ENCODE measurements at regions of chr7 and their contacts with region 1.

Region 1: DNA sequence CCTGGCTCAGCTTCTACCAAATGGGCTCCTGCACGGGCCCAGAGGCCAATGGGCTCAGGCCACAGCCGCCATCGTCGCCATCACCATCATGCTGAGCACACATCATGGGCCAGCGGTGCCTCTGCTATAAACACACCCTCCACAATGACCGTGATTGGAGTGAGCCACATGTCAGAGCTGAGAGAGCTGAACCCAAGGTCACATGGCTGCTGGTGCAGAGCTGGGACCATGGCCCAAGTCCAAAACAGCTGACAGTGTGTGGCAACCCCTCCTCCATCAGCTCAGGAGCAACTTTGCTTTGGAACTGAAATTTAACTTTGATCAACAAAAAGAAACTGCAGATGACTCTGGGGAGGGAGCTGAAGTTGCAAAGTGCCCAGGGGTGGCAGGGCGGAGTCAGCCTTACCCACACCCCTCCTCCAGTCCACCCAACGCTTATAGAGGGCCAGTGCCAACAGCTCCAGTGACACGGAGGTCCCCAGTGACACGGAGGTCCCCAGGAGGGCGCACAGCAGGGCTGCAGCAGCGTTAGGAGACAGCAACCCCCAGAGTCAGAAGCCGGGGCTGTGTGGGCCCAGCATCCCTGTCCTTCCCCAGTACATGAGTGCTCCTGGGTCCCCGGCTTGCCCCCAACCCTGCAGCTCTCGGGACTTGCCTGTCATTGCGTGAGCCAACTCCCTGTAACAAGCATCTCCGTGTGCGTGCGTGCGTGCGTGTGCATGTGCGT is 249.6 kb downstream of the ELFN1 start:
- DNase-seq: no peak
- H3K4me3 Mint-ChIP-seq: peak overlapping the region; percentile 72
- H3K27ac Mint-ChIP-seq: no peak overlapping the region
- H3K4me1 Mint-ChIP-seq: peaks cover 50% of the 10 kb centered on the region
- H3K27me3 Mint-ChIP-seq: peaks cover 25% of the 10 kb centered on the region

Region 2: GRCh38 chr7:1664711-1665548 is 254.8 kb before region 1 on chr7:
- intact Hi-C with region 1: loop called (anchors 10 kb)
- DNase-seq: peak; percentile 31
- H3K4me3 Mint-ChIP-seq: no peak overlapping the region
- H3K27ac Mint-ChIP-seq: no peak overlapping the region
- H3K4me1 Mint-ChIP-seq: no peaks in the 10 kb centered on the region
- H3K27me3 Mint-ChIP-seq: peaks cover 41% of the 10 kb centered on the region

Region 3: GRCh38 chr7:1940402-1940786 is 20.7 kb after region 1 on chr7:
- intact Hi-C with region 1: loop called (anchors 1 kb)
- DNase-seq: peak; percentile 92
- H3K4me3 Mint-ChIP-seq: peak overlapping the region; percentile 84
- H3K27ac Mint-ChIP-seq: peak overlapping the region; percentile 91
- H3K4me1 Mint-ChIP-seq: peaks cover 55% of the 10 kb centered on the region
- H3K27me3 Mint-ChIP-seq: no peaks in the 10 kb centered on the region

Region 4: DNA sequence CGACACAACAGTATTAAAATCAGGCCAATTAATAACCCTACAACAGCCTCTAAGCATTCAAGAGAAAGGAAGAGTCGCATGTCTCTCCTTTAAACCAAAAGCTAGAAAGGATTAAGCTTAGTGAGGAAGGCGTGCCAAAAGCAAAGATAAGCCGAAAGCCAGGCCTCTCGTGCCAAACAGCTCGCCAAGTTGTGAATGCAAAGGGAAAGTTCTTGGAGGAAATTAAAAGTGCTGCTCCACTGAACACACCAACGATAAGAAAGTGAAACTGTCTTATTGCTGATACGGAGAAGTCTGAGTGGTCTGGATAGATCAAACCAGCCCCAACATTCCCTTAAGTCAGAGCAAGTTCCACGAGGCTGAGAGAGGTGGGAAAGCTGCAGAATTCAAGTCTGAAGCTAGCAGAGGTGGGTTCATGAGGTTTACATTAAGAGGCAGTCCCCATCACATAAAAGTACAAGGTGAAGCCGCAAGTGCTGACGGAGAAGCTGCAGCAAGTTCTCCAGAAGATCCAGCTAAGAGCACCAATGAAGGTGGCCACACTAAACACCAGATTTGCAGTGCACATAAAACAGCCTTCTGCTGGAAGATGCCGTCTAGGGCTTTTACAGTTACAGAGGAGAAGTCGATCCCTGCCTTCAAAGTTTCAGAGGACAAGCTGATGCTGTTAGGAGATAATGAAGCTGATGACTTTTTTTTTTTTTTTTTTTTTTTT is 118.3 kb after region 1 on chr7:
- intact Hi-C with region 1: loop called (anchors 5 kb)
- DNase-seq: peak; percentile 24
- H3K4me3 Mint-ChIP-seq: peak overlapping the region; percentile 74
- H3K27ac Mint-ChIP-seq: peak overlapping the region; percentile 25
- H3K4me1 Mint-ChIP-seq: peaks cover 41% of the 10 kb centered on the region
- H3K27me3 Mint-ChIP-seq: no peaks in the 10 kb centered on the region

Region 5: DNA sequence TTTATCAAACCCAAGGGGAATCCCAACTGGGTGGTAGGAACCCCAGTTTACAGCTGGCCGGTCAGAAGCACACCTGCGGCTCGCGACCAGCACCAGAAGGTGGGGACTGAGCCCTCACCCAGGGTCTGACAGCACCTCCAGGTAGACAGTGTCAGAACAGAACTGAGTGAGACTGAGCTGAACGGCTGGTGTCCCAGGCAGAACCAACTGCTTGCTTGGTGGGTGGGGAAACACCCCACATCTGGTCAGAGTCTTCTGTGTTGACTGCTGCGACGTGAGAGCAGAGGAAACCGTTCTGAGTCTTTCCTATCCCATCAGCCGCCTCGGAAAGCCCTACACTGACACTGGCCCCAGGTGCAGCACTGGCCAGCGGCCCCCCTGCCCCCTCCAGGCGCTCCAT is 152.3 kb after region 1 on chr7:
- intact Hi-C with region 1: no loop called
- DNase-seq: no peak
- H3K4me3 Mint-ChIP-seq: no peak overlapping the region
- H3K27ac Mint-ChIP-seq: no peak overlapping the region
- H3K4me1 Mint-ChIP-seq: peaks cover 1% of the 10 kb centered on the region
- H3K27me3 Mint-ChIP-seq: no peaks in the 10 kb centered on the region

Region 6: DNA sequence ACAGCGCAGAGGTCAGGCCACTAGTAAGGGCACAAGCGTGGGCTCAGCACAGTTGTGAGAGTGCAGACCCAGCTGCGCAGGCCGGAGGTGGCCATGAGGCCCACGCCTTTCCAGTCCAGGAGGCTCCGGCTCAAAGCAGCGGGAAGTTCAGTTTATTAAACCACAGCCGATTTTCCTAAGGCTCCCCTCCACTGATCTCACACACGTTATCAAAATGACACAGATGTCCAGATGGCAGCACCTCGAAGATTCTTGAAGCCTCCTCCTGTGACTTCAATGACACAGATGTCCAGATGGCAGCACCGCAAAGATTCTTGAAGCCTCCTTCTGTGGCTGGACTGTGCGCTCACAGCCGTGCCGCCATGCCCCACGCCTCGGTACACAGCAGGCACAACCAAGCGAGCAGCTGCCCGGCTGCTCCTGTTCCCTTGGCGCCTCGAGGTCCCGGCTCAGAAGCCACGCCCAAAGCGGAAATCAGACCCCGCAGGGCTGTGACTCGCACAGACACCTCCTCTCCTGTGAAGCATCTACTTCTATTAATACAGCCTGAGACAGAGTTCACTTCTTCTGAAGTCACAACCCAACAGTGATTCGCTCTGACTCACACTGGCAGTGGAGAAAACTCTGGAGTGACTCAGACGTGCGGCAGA is 190.4 kb after region 1 on chr7:
- intact Hi-C with region 1: loop called (anchors 10 kb)
- DNase-seq: peak; percentile 16
- H3K4me3 Mint-ChIP-seq: no peak overlapping the region
- H3K27ac Mint-ChIP-seq: peak overlapping the region; percentile 48
- H3K4me1 Mint-ChIP-seq: peaks cover 28% of the 10 kb centered on the region
- H3K27me3 Mint-ChIP-seq: no peaks in the 10 kb centered on the region

Region 7: DNA sequence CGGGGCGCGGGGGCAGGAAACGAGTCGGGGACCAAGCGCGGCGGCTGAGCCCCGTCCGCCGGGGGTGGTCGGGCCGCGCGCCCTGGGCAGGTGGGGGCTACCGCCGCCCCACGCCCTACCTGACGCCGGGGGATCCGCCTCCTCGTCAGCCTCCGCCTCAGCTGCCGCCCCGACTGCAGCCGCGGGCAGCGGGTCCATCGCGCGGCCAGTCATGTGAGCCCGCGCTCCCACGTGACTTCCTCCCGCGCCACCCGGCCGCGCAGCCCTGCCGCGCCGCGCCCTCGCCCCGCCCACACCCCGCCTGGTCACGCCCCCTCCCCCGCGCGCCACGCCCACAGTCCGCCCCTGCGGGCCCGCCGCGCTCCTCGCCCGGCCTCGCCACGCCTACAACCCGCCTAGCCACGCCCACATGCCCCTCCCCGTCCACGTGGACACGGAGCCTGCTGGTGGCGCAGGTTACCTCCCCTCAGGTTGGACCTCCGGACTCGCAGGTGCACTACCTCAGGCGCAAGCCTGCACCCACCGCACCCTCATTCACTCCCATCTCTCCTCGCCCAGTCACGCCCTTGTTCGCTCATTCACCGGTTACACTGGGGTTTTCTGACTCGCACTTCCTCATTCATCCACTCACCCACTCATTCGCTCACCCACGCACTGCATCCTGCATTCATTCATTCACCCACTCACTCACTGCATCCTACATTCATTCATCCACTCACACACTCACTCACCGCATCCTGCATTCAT is 394.7 kb after region 1 on chr7 and contains the start of gene SNX8:
- intact Hi-C with region 1: loop called (anchors 10 kb)
- DNase-seq: peak; percentile 91
- H3K4me3 Mint-ChIP-seq: peak within 1 kb of the TSS; percentile 88
- H3K27ac Mint-ChIP-seq: peak within 1 kb of the TSS; percentile 69
- H3K4me1 Mint-ChIP-seq: peaks cover 13% of the 10 kb centered on the region
- H3K27me3 Mint-ChIP-seq: no peaks in the 10 kb centered on the region
- total RNA-seq, gene SNX8: 31.8 and 38.7 TPM in 2 replicates